PC-3 (cell line): ENCODE measurements at regions of chr1 and their contacts with region 1.

Region 1: DNA sequence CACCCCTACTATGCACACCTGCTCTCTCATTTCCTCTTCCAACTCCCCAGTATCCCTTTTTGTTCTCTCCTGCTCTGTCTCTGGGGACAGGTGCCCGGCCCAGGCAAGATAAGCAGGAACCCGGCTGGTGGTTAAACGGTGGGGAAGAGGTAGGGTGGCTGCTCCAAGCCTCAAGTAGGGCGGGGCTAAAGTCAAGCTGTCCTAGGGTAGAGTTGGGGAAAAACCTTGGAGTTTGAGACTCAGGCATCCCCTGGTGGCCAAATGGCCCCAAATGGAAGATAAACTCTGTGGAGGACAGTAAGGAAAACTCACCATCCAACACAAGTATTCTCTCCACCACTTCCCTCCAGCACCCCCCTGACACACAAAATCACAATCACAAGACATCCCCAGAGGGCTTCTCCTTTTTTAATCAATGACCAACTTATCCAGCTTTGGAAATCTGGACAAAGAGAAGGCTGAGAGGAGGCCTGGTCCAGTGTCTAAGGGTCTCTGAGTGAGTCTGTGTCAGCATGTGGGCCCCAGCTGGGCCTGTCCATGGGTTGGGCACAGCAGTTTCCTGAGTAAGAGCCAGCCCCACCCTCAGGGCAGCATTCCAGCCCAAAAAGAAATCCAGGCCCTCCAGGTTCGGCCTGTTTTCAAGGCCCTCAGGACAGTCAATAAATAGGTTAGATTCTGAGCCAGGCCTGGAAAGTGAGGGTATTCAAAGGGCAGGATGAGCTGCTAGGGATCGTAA is 9.8 kb downstream of the POMGNT1 start:
- DNase-seq: peak; percentile 45
- ATAC-seq: peak; percentile 33; the same call in 1 of the 2 replicates
- H3K4me3 ChIP-seq: no peak overlapping the region
- H3K27ac ChIP-seq: peak overlapping the region; percentile 16
- H3K4me1 ChIP-seq: peaks cover 35% of the 10 kb centered on the region
- H3K27me3 ChIP-seq: no peaks in the 10 kb centered on the region
- CTCF ChIP-seq: peak; percentile 38

Region 2: DNA sequence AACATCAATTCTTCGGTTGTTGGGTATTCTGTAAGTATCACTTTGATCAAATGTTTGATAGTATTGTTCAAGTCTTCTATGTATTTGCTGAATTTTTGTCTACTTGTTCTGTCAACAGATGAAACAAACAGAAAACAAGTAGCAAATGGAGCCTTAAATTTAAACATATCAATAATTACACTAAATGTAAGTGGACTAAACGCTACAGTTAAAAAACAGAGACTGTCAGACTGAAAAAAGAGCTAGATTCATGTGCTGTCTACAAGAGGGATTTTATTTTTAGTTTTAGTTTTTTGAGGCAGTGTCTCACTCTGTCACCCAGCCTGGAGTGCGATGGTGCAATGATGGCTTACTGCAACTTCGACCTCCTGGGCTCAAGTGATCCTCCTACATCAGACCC is 48.4 kb after region 1 on chr1:
- CTCF ChIA-PET with region 1: interaction called, 6 read pairs
- POLR2A ChIA-PET with region 1: interaction called, 12 read pairs
- intact Hi-C with region 1: no loop called
- DNase-seq: no peak
- ATAC-seq: no peak
- H3K4me3 ChIP-seq: no peak overlapping the region
- H3K27ac ChIP-seq: no peak overlapping the region
- H3K4me1 ChIP-seq: no peaks in the 10 kb centered on the region
- H3K27me3 ChIP-seq: no peaks in the 10 kb centered on the region
- CTCF ChIP-seq: no peak